ENCODE measurements at regions of chr2 and their contacts with region 1.

Region 1: GRCh38 chr2:165401285-165401852 is 68.1 kb upstream of the CSRNP3 start:
- DNase-seq: no peak
- ATAC-seq: no peak

Region 2: DNA sequence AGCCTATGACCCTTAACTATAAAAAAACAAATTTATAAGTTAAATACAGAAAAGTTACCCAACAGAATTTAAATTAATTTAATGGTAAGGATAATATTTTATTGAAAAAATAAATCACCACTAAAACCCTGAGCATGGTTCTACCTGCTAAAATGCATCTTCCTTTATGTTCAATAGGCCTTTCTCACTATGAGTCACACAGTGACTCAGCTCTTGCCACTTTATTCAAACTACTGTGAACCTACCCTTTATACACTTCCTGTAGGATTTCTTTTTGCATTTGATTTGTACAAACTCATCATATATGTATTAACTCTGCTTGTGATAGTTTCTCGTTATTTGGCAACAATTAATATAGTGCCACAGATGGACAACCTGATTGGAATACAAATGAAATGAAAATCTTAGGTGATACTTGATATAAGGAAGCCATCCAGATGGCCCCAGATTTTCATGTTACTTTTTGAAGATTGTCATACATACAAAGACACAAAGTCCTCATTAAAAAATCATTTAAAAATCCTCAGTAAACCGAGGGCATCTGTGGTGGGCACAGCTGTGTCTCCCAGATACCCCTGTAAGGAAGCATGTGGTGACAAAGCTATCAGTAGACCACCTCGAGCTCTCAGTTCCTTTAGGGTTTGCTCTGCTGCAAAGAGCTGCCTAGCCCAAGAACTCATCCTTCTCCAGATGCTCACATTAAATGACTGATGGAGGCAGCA is 504.6 kb before region 1 on chr2:
- intact Hi-C with region 1: no loop called
- DNase-seq: no peak
- ATAC-seq: no peak

Region 3: GRCh38 chr2:165698444-165698894 is 297.1 kb after region 1 on chr2:
- intact Hi-C with region 1: loop called (anchors 5 kb)
- DNase-seq: peak; percentile 43
- ATAC-seq: peak; percentile 68

Region 4: DNA sequence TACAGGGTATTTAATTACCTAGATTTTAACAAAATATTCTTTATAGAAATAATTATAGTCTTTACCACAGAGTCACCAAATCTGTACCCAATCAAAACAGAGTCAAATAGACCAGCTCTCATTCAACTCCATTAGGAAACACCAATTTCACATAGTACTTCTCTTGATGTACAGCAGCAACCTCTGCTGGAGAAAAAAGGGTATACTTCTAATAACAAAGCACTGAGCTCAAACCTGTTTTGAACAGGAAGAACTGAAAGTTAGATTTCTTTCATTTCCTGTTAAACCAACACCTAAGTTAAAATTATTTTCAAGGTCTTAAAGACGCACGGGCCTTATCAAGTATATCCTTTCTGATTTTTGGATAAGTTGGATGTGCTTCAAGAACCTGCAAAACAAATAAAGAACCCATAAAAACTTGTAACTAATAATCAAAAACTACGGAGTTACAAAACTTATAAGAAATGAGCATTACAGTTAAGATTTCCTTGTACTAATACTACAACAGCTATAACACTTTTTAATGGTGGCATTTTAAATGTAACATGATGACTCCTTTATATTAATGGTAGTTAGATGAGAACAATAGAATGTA is 473.2 kb after region 1 on chr2:
- intact Hi-C with region 1: loop called (anchors 5 kb)
- DNase-seq: no peak
- ATAC-seq: peak; percentile 34

Measured in left ventricle myocardium superior (tissue), 1 donor.